Right ventricle myocardium superior (tissue), 1 donor: ENCODE measurements at regions of chr6 and their contacts with region 1.

Region 1: DNA sequence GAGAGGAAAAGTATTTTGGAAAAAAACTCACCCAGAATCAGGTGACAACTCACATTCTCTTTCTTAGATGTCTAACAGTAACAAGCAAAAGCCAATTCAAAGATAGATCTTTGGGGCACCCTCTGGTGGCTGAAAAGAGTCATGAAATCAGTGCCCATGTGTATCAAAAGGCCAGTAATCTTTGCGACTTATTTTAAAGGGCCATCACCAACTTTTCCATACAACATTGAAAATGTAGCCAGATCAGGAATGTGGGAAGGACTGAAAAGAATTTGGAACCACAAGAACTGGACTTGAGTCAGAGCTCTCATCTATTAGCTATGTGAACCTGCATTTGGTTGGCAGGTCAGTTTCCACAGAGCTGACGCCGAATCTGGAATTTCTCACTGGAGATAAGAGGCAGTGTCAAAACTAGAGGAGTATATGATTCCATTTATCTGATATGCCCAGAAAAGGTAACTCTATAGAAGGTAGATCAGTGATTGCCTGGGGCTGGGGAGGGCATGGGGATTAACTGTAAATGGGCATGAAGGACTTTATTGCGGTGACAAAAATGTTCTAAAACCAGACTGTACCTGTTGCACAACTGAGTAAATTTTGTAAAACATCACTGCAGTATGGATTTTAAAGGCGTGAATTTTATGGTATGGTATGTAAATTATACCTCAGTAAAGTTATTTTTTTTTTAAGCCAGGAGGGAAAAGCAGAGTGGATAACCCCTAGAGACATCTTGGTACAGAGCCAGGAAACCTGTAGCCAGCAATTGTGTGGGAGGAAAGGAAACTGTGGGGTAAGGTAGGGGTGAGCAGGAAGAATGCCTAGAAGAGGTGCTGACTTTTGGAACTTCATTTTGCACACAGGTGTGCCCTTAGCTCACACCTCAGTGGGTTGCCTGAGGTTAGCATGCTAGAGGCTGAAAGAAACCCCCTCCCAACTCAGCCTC is 117.1 kb upstream of the ASF1A start:
- DNase-seq: peak; percentile 49
- ATAC-seq: peak; percentile 87

Region 2: DNA sequence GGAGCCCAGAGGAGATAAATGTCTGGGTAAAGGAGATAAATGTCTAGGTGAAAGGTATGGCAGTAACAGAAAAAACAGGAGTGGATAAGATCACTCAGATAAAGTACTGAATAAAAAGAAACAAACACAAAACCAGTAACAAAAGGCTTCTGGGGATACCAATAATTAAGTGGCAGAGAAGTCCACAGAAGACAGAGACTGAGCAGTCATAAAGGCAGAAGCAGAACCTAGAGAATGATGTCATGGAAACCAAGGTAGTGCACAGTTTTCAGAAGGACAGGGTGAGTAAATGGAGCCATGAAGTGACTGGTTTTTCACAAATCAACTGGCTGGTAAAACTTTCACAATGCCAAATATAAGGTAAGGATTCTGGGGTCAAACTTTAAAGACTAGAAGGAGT is 309.7 kb before region 1 on chr6:
- intact Hi-C with region 1: no loop called
- DNase-seq: no peak
- ATAC-seq: no peak

Region 3: DNA sequence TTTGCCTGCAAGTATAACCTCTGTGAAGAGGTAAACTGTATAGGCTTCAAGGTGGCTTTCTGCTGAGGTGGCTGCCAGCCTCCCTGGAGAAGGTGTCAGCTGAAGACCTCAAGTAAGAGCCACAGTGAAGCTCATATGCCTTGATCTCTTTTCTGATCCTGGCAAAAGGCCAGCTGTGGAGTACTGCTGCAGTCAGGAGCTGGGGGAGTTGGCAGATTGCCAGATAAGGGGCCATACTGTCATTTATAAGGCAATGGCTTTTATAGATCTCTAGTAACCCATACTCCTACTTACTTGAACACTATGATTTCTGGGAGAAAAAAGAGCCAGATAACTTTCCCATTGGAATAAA is 116.7 kb before region 1 on chr6:
- intact Hi-C with region 1: loop called (anchors 10 kb)
- DNase-seq: no peak
- ATAC-seq: no peak

Region 4: GRCh38 chr6:118813775-118814174 is 36.9 kb after region 1 on chr6:
- intact Hi-C with region 1: no loop called
- DNase-seq: no peak
- ATAC-seq: no peak

Region 5: DNA sequence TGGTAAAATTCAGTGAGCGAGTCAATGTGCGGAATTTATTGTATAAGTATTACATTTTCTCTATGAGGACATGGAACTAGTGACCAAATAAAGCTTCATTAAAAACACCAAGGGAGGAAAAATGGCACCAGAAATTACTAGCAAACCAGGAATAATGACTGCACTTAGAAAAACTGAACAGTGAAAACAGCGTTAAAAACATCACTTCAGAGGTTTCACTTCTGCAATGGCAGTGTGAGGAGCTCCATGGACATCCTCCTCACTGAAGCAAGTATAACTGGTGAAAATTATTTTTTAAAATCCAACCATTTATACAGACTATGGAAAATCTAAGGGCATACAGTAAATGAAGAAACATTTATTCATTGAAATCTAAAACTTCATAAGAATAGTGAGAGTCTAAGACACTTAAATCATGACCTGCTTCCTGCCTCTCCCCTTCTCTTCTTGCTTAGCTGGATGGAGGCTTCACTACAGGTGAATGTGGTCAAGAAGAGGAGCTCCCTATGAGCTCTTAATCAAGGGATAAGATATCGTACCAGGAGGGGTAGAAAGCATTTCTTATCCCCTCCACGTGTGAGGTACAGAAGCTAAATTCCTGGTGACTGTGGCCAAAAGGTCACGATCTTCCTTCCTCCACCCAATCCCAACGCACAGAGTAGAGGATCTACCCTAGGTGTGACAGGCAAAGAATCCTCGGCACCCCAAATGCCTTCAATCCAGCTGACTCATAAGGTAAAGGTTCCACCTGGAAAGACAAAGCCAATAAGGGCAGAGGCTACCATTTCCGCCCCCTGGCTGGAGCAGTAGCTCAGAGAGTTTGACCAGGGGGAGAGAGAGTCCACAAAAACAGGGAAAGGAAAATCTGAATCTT is 104.8 kb after region 1 on chr6:
- intact Hi-C with region 1: no loop called
- DNase-seq: no peak
- ATAC-seq: no peak

Region 6: DNA sequence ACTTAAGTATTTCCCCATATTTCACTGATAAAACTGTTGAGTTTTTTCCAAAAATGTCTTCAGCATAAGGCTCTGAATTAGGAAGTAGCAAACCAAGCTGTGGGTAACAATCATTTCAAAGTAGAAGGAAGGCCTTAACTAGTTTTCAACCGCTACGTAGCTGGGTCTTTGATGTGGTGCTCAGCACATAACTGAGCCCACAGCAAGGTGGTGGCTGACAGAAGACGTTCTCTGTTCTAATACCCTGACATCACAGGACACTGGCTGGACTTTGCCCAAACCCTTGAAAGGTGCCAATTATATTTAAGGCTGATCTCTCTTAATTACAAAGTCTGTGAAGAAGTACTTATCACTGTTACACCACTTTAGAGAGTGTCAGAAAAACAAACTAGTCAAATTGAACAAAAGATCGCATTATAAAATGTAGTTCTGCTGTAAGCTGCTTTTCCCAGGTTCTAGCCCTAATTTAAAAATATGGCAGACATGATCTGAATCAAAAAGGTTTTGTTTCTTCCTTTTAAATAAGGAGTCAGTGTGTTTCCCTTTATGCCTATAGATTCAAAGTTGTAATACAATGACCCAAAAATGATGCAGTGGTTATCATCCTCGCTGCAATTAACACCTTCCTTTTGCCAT is 546.0 kb after region 1 on chr6:
- intact Hi-C with region 1: no loop called
- DNase-seq: no peak
- ATAC-seq: no peak